GM12878 (cell line): ENCODE measurements at regions of chr11 and their contacts with region 1.

Region 1: DNA sequence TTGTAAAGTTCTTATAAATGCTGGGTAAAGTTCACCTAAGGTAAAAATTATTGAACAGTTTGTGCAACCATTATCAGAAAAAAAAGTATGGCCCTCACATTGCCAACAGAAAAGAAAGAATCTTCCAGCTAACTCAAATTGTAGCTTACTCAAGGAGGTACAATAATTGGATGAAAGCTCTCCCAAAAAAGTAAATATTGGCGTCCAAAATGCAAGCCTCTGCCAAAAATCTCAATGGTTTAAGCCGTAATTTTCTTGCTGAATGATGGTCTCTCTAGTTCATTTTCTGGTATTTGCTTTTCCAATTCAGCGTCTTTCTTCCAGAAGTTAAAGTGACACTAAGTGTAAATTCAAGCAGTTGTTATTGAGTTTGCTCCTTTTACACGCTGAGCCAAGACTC is 727.3 kb downstream of the LRRC4C start:
- DNase-seq: no peak
- ATAC-seq: no peak
- H3K4me3 ChIP-seq: no peak overlapping the region
- H3K27ac ChIP-seq: no peak overlapping the region
- H3K4me1 ChIP-seq: no peaks in the 10 kb centered on the region
- H3K27me3 ChIP-seq: no peaks in the 10 kb centered on the region
- CTCF ChIP-seq: no peak
- EP300 ChIP-seq: no peak
- POLR2A ChIP-seq: no peak
- RAD21 ChIP-seq: no peak

Region 2: GRCh38 chr11:40679276-40679675 is 52.9 kb before region 1 on chr11:
- CTCF ChIA-PET with region 1: no interaction called
- POLR2A ChIA-PET with region 1: no interaction called
- RAD21 ChIA-PET with region 1: no interaction called
- SMC1A ChIA-PET with region 1: no interaction called
- in situ Hi-C with region 1: no loop called
- intact Hi-C with region 1: loop called (anchors 10 kb)
- DNase-seq: no peak
- ATAC-seq: no peak
- H3K4me3 ChIP-seq: no peak overlapping the region
- H3K27ac ChIP-seq: no peak overlapping the region
- H3K4me1 ChIP-seq: no peaks in the 10 kb centered on the region
- H3K27me3 ChIP-seq: no peaks in the 10 kb centered on the region
- CTCF ChIP-seq: no peak
- EP300 ChIP-seq: no peak
- POLR2A ChIP-seq: no peak
- RAD21 ChIP-seq: no peak

Region 3: GRCh38 chr11:40746282-40746681 is 14.2 kb after region 1 on chr11:
- CTCF ChIA-PET with region 1: no interaction called
- POLR2A ChIA-PET with region 1: no interaction called
- RAD21 ChIA-PET with region 1: no interaction called
- SMC1A ChIA-PET with region 1: no interaction called
- in situ Hi-C with region 1: no loop called
- intact Hi-C with region 1: no loop called
- DNase-seq: no peak
- ATAC-seq: no peak
- H3K4me3 ChIP-seq: no peak overlapping the region
- H3K27ac ChIP-seq: no peak overlapping the region
- H3K4me1 ChIP-seq: no peaks in the 10 kb centered on the region
- H3K27me3 ChIP-seq: no peaks in the 10 kb centered on the region
- CTCF ChIP-seq: no peak
- EP300 ChIP-seq: no peak
- POLR2A ChIP-seq: no peak
- RAD21 ChIP-seq: no peak

Region 4: DNA sequence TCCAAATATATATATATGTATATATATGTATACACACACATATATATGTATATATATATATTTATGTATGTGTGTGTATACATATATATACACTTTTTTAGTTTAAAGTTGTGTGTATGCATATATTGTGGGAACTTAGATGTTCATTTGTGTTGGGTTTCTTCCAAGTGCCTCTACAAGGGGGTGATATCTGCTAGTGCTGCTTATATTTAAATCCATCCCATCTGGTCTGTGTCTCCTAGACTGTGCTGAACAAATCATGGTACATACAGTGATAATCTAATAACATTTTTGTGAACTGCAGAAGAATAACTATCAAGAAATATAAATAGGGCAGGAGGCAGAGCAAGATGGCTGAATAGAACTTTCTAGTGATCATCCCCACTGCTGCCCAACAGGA is 30.9 kb after region 1 on chr11:
- CTCF ChIA-PET with region 1: no interaction called
- POLR2A ChIA-PET with region 1: no interaction called
- RAD21 ChIA-PET with region 1: no interaction called
- SMC1A ChIA-PET with region 1: no interaction called
- in situ Hi-C with region 1: no loop called
- intact Hi-C with region 1: no loop called
- DNase-seq: no peak
- ATAC-seq: no peak
- H3K4me3 ChIP-seq: no peak overlapping the region
- H3K27ac ChIP-seq: no peak overlapping the region
- H3K4me1 ChIP-seq: no peaks in the 10 kb centered on the region
- H3K27me3 ChIP-seq: no peaks in the 10 kb centered on the region
- CTCF ChIP-seq: no peak
- EP300 ChIP-seq: no peak
- POLR2A ChIP-seq: no peak
- RAD21 ChIP-seq: no peak